ENCODE measurements at regions of chr3 and their contacts with region 1.

Region 1: DNA sequence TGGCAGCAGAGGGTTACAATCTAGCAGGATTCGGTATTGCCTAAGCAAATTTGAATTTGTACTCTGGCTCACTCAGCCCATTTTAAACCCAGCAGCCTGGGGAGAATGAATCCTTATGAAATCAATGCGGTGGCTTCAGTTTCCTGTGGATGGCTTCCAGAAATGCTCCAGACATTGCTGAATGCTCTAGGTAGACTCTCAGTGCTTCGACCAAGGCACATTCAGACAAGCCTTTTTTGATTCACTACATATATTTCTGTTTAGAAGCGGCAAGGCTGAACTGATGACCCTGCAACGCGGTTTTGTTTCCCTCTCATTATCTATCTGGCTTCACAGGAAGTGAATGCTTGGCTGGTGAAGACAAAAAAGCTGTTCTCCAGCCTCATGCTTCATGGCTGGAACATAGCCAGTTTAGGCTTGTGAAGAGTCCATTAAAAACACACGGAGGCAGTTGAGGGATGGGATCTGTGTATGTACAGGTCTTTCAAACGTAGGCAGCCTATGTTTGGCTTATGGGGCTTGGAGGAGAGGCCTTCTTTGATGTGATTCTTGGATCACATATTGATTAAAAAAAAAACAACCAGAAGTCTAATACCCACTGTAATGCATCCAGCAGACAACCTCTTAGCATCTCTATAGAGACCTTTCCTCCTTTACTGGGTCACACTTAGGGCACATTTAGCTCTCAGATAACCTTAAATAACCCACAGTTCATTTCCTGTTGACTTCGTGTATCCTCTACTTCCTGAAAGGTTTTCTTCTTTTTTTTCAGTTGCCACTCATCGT is 400.2 kb upstream of the TBL1XR1 start:
- DNase-seq: peak; percentile 56 to 64
- ATAC-seq: peak; percentile 81 to 85
- H3K4me3 ChIP-seq: no peak overlapping the region
- H3K27ac ChIP-seq: peak overlapping the region; percentile 17 to 61 (median 24)
- H3K4me1 ChIP-seq: peaks cover 31 to 33% of the 10 kb centered on the region in 2 donors
- H3K27me3 ChIP-seq: no peaks in the 10 kb centered on the region
- CTCF ChIP-seq: no peak
- POLR2A ChIP-seq: no peak

Region 2: DNA sequence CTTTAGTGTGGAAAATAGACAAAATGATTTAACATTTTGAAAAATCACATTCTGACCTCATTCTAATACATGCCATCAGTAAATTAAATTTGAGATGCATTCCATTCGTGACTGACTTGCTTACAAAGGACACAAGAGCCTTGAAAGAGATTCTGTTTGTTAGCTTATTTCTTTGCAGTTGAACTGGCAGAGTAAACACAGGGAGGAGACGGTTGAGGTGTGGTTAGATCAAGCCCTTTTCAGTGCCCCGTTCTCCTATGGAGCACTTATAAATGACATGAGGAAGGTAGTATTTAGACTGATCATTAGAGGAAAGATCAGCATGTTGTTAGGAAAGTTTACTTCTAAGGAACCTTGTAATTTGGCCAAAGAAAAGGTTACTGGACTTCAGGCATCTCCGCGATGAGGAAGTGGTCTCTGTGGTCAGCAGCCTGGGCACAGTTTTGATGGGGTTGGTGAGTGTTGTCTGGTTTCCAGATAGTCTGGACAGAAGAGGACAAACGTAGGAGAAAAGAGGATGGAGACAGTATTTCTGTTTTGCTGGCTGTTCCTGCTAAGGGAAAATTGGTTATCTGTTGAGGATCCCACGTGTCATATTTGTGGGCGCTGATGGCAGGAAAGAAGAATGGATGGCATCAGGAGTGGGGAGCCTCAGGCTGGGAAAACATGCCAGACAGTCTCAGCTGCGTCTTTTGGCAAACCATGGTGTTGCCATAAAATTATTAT is 71.4 kb before region 1 on chr3:
- in situ Hi-C with region 1: no loop called
- intact Hi-C with region 1: loop called (anchors 5 kb)
- DNase-seq: no peak
- ATAC-seq: peak in 1 of 2 donors; percentile 12
- H3K4me3 ChIP-seq: no peak overlapping the region
- H3K27ac ChIP-seq: no peak overlapping the region
- H3K4me1 ChIP-seq: peaks cover 17 to 51% of the 10 kb centered on the region in 2 donors
- H3K27me3 ChIP-seq: no peaks in the 10 kb centered on the region
- CTCF ChIP-seq: no peak
- POLR2A ChIP-seq: no peak

Region 3: GRCh38 chr3:177724020-177724638 is 126.6 kb after region 1 on chr3:
- in situ Hi-C with region 1: no loop called
- intact Hi-C with region 1: loop called (anchors 1 kb)
- DNase-seq: peak; percentile 94
- ATAC-seq: peak; percentile 93 to 97
- H3K4me3 ChIP-seq: no peak overlapping the region
- H3K27ac ChIP-seq: peak overlapping the region; percentile 84 to 87 (median 86)
- H3K4me1 ChIP-seq: peaks cover 46 to 60% of the 10 kb centered on the region in 2 donors
- H3K27me3 ChIP-seq: no peaks in the 10 kb centered on the region
- CTCF ChIP-seq: no peak
- POLR2A ChIP-seq: peak in 1 of 2 donors; percentile 59